Activated CD8-positive, alpha-beta T cell treated with anti-CD3 and anti-CD28 coated beads for 36 hours (primary cell): ENCODE measurements at regions of chr17 and their contacts with region 1.

Region 1: GRCh38 chr17:34199932-34200534 is 55.1 kb upstream of the CCL2 start:
- DNase-seq: peak; percentile 77
- ATAC-seq: peak; percentile 90
- H3K4me3 Mint-ChIP-seq: no peak overlapping the region
- H3K27ac Mint-ChIP-seq: no peak overlapping the region
- H3K4me1 Mint-ChIP-seq: peaks cover 14% of the 10 kb centered on the region
- H3K27me3 Mint-ChIP-seq: peaks cover 21% of the 10 kb centered on the region
- CTCF ChIP-seq: peak; percentile 100

Region 2: GRCh38 chr17:34051046-34051445 is 149.0 kb before region 1 on chr17:
- CTCF ChIA-PET with region 1: no interaction called
- POLR2A ChIA-PET with region 1: no interaction called
- intact Hi-C with region 1: no loop called
- DNase-seq: no peak
- ATAC-seq: no peak
- H3K4me3 Mint-ChIP-seq: no peak overlapping the region
- H3K27ac Mint-ChIP-seq: no peak overlapping the region
- H3K4me1 Mint-ChIP-seq: no peaks in the 10 kb centered on the region
- H3K27me3 Mint-ChIP-seq: peaks cover 24% of the 10 kb centered on the region
- CTCF ChIP-seq: no peak

Region 3: DNA sequence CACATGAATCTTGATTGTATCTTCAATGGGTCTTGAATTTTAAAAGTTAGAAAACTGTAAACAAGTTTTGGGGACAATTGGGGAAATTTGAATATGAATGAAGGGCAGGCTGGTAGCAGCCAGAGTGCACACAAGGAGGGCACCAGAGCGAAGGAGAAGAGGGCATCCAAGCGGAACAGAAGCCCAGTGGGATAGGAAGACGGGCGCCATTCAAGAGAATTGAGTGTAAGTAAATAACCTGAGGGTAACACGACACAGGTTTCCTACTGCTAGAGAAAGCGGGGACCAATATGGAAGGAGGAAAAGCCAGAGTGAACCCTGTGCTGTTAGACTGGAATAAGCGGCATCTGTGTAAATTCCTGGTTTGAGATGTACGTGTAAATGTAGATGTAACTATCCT is 60.0 kb before region 1 on chr17:
- CTCF ChIA-PET with region 1: no interaction called
- POLR2A ChIA-PET with region 1: no interaction called
- intact Hi-C with region 1: no loop called
- DNase-seq: no peak
- ATAC-seq: no peak
- H3K4me3 Mint-ChIP-seq: no peak overlapping the region
- H3K27ac Mint-ChIP-seq: no peak overlapping the region
- H3K4me1 Mint-ChIP-seq: no peaks in the 10 kb centered on the region
- H3K27me3 Mint-ChIP-seq: peaks cover 19% of the 10 kb centered on the region
- CTCF ChIP-seq: no peak

Region 4: DNA sequence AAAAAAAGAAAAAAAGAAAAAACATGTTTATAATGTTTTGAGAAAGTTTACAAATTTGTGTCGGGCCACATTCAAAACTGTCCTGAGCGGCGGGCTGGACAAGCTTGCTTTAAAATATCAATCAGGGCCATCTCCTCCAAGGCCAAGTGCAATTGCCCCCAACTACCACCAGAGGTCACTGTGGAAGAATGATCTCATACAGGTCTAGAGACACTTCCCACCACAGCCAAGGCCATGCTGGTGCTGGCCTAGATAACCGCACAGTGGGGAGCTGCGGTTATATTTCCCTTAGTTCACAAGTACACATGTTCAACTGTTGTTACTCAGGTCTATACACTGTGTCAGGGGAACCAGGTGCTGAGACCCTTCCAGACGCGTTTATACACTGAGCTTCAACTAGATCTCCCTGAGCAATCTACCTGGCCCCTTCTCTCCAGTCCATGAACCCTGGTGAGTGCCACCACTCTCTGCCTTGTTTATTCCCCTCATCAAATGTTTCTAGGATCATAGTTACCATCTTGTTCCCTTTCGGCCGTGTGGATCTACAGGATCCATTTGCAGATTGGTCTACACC is 28.7 kb before region 1 on chr17:
- CTCF ChIA-PET with region 1: interaction called, 10 read pairs
- POLR2A ChIA-PET with region 1: interaction called, 3 read pairs
- intact Hi-C with region 1: no loop called
- DNase-seq: peak; percentile 77
- ATAC-seq: peak; percentile 83
- H3K4me3 Mint-ChIP-seq: no peak overlapping the region
- H3K27ac Mint-ChIP-seq: no peak overlapping the region
- H3K4me1 Mint-ChIP-seq: peaks cover 1% of the 10 kb centered on the region
- H3K27me3 Mint-ChIP-seq: no peaks in the 10 kb centered on the region
- CTCF ChIP-seq: peak; percentile 88

Region 5: DNA sequence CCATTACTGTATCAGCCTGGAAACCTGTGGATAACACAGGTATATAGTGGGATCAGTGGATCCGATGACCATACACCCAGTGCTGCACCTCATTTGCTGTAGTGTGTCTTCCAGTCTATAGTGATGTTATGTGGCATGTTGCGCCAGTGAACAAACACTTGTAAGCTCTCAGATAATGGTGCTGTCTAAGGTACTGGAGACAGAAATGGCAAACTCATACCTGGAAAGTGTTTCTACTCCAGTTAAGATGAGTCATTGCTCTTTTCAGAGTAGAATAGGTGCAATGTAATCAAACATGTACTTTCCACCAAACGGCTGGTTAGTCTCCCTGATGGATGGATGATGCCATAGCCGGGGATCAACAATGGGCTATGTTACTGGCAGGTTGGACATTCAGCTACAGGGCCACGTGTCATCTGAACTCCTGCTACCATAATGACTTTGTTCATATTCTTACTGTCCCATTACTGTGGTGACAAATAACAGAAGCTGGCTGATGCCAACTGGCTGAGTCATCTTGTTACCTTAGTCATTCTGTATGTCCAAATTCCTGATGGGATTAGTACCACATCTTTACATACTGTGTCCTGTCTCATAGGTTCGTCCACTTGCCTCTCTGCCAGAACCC is 91.8 kb after region 1 on chr17:
- CTCF ChIA-PET with region 1: no interaction called
- POLR2A ChIA-PET with region 1: no interaction called
- intact Hi-C with region 1: no loop called
- DNase-seq: no peak
- ATAC-seq: no peak
- H3K4me3 Mint-ChIP-seq: no peak overlapping the region
- H3K27ac Mint-ChIP-seq: no peak overlapping the region
- H3K4me1 Mint-ChIP-seq: no peaks in the 10 kb centered on the region
- H3K27me3 Mint-ChIP-seq: peaks cover 10% of the 10 kb centered on the region
- CTCF ChIP-seq: no peak

Region 6: GRCh38 chr17:34321964-34322363 is 121.9 kb after region 1 on chr17:
- CTCF ChIA-PET with region 1: interaction called, 10 read pairs
- POLR2A ChIA-PET with region 1: no interaction called
- intact Hi-C with region 1: no loop called
- DNase-seq: no peak
- ATAC-seq: no peak
- H3K4me3 Mint-ChIP-seq: no peak overlapping the region
- H3K27ac Mint-ChIP-seq: no peak overlapping the region
- H3K4me1 Mint-ChIP-seq: no peaks in the 10 kb centered on the region
- H3K27me3 Mint-ChIP-seq: peaks cover 2% of the 10 kb centered on the region
- CTCF ChIP-seq: no peak

Region 7: GRCh38 chr17:34370997-34371395 is 171.0 kb after region 1 on chr17:
- CTCF ChIA-PET with region 1: interaction called, 12 read pairs
- POLR2A ChIA-PET with region 1: no interaction called
- intact Hi-C with region 1: no loop called
- DNase-seq: no peak
- ATAC-seq: peak; percentile 51
- H3K4me3 Mint-ChIP-seq: no peak overlapping the region
- H3K27ac Mint-ChIP-seq: no peak overlapping the region
- H3K4me1 Mint-ChIP-seq: peaks cover 13% of the 10 kb centered on the region
- H3K27me3 Mint-ChIP-seq: peaks cover 2% of the 10 kb centered on the region
- CTCF ChIP-seq: no peak

Region 8: GRCh38 chr17:34378664-34379101 is 178.7 kb after region 1 on chr17:
- CTCF ChIA-PET with region 1: interaction called, 13 read pairs
- POLR2A ChIA-PET with region 1: no interaction called
- intact Hi-C with region 1: no loop called
- DNase-seq: peak; percentile 54
- ATAC-seq: peak; percentile 57
- H3K4me3 Mint-ChIP-seq: no peak overlapping the region
- H3K27ac Mint-ChIP-seq: no peak overlapping the region
- H3K4me1 Mint-ChIP-seq: peaks cover 49% of the 10 kb centered on the region
- H3K27me3 Mint-ChIP-seq: peaks cover 14% of the 10 kb centered on the region
- CTCF ChIP-seq: no peak

Region 9: GRCh38 chr17:34443619-34444469 is 243.8 kb after region 1 on chr17:
- CTCF ChIA-PET with region 1: no interaction called
- POLR2A ChIA-PET with region 1: no interaction called
- intact Hi-C with region 1: no loop called
- DNase-seq: peak; percentile 14
- ATAC-seq: no peak
- H3K4me3 Mint-ChIP-seq: no peak overlapping the region
- H3K27ac Mint-ChIP-seq: no peak overlapping the region
- H3K4me1 Mint-ChIP-seq: no peaks in the 10 kb centered on the region
- H3K27me3 Mint-ChIP-seq: peaks cover 10% of the 10 kb centered on the region
- CTCF ChIP-seq: peak; percentile 40